Activated CD4-positive, alpha-beta T cell treated with anti-CD3 and anti-CD28 coated beads, Interleukin-2, amount 10 ng/mL, durations not matched to agents 24 days and 14 days (primary cell): ENCODE measurements at regions of chr6 and their contacts with region 1.

Region 1: DNA sequence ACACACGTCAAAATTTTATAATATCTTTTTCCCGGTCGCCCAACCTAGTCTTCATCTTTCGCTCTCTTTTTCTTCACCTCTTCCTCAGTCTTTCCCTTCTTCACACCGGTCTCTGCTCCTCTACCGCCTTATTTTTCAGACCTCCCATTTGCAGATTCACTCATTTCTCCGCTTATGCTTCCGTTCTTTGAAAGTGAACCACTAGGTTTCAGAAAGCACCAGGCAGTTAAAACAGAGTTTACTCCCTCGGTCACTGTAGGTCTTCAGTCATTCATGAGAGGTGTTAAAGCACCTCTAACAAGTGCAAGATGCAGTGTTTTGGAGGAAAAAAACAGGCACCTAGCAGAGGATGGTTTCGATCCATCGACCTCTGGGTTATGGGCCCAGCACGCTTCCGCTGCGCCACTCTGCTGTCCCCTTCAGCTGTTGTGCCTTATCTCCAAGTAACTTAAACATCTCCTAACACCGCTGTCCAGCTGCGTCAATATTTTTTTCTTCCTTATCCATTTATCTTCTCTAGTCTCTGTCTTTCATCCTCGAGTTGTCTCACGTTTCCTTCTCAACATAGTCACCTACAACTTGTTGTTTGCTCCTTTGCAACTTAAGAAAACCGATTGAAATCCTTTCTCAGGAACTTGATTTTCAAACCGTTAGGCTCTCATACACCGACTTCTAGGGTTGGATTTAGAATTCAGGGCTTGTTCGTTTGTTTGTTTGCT is 119.7 kb upstream of the ZNF184 start:
- DNase-seq: peak; percentile 83
- H3K4me3 Mint-ChIP-seq: no peak overlapping the region
- H3K27ac Mint-ChIP-seq: no peak overlapping the region
- H3K4me1 Mint-ChIP-seq: peaks cover 2% of the 10 kb centered on the region
- H3K27me3 Mint-ChIP-seq: peaks cover 27% of the 10 kb centered on the region

Region 2: DNA sequence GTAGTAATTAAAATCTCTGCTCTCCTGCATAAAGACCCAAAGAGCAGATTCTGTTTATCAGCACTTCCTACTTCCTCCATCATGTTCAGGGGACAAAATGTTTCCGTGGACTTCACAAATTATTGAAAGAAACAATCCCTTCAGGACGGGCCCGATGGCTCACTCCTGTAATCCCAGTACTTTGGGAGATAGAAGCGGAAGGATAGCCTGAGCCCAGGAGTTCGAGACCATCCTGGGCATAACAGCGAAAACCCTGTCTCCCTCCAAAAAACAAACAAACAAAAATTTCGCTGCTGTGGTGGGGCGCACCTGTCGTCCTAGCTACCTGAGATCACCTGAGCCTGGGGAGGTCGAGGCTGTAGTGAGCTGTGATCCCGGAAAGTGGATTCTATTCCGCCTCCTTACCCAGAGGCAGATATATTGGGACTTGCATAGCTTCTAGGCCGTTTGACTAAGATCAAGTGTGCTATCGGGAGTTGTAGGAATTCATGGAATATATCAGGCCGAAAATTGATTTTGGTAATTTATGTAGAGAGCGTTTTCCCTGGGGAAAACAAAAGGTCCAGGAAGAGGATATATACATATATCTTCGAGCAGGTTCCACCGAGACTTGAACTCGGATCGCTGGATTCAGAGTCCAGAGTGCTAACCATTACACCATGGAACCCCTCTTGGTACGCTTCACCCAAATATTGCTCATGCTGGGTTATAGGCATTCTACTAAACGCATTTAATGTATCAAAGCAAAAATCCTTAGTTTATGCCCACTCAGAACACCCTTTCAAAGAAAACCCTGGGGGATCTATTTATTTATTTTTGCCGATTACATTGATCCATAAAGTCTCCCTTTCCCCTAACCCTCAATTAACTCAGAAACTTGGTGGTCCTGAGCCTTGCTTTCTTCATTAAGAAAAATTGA is 45.2 kb before region 1 on chr6:
- intact Hi-C with region 1: loop called (anchors 1 kb)
- DNase-seq: peak; percentile 68
- H3K4me3 Mint-ChIP-seq: no peak overlapping the region
- H3K27ac Mint-ChIP-seq: peak overlapping the region; percentile 11
- H3K4me1 Mint-ChIP-seq: peaks cover 13% of the 10 kb centered on the region
- H3K27me3 Mint-ChIP-seq: peaks cover 70% of the 10 kb centered on the region

Region 3: GRCh38 chr6:27608916-27609883 is 16.6 kb after region 1 on chr6:
- intact Hi-C with region 1: loop called (anchors 2 kb)
- DNase-seq: peak; percentile 76
- H3K4me3 Mint-ChIP-seq: no peak overlapping the region
- H3K27ac Mint-ChIP-seq: no peak overlapping the region
- H3K4me1 Mint-ChIP-seq: peaks cover 15% of the 10 kb centered on the region
- H3K27me3 Mint-ChIP-seq: peaks cover 28% of the 10 kb centered on the region

Region 4: GRCh38 chr6:27922949-27923348 is 330.3 kb after region 1 on chr6:
- intact Hi-C with region 1: no loop called
- DNase-seq: no peak
- H3K4me3 Mint-ChIP-seq: no peak overlapping the region
- H3K27ac Mint-ChIP-seq: no peak overlapping the region
- H3K4me1 Mint-ChIP-seq: no peaks in the 10 kb centered on the region
- H3K27me3 Mint-ChIP-seq: peaks cover 21% of the 10 kb centered on the region